PC-3 (cell line): ENCODE measurements at regions of chr1 and their contacts with region 1.

Region 1: GRCh38 chr1:154272217-154272998 is at the start of gene HAX1:
- DNase-seq: peak; percentile 99
- ATAC-seq: peak; percentile 93
- H3K4me3 ChIP-seq: peak within 1 kb of the TSS; percentile 87
- H3K27ac ChIP-seq: peak within 1 kb of the TSS; percentile 37
- H3K4me1 ChIP-seq: peaks cover 5% of the 10 kb centered on the region
- H3K27me3 ChIP-seq: no peaks in the 10 kb centered on the region
- CTCF ChIP-seq: peak; percentile 97
- total RNA-seq, gene HAX1: 230 and 281 TPM in 2 replicates

Region 2: GRCh38 chr1:153946622-153947241 is 325.7 kb before region 1 on chr1 and contains the start of gene DENND4B:
- CTCF ChIA-PET with region 1: no interaction called
- POLR2A ChIA-PET with region 1: interaction called, 15 read pairs
- intact Hi-C with region 1: no loop called
- DNase-seq: peak; percentile 86
- ATAC-seq: peak; percentile 88
- H3K4me3 ChIP-seq: peak within 1 kb of the TSS; percentile 81
- H3K27ac ChIP-seq: peak within 1 kb of the TSS; percentile 43
- H3K4me1 ChIP-seq: peaks cover 13% of the 10 kb centered on the region
- H3K27me3 ChIP-seq: no peaks in the 10 kb centered on the region
- CTCF ChIP-seq: peak; percentile 90
- total RNA-seq, gene DENND4B: 27.3 and 38.0 TPM in 2 replicates

Region 3: DNA sequence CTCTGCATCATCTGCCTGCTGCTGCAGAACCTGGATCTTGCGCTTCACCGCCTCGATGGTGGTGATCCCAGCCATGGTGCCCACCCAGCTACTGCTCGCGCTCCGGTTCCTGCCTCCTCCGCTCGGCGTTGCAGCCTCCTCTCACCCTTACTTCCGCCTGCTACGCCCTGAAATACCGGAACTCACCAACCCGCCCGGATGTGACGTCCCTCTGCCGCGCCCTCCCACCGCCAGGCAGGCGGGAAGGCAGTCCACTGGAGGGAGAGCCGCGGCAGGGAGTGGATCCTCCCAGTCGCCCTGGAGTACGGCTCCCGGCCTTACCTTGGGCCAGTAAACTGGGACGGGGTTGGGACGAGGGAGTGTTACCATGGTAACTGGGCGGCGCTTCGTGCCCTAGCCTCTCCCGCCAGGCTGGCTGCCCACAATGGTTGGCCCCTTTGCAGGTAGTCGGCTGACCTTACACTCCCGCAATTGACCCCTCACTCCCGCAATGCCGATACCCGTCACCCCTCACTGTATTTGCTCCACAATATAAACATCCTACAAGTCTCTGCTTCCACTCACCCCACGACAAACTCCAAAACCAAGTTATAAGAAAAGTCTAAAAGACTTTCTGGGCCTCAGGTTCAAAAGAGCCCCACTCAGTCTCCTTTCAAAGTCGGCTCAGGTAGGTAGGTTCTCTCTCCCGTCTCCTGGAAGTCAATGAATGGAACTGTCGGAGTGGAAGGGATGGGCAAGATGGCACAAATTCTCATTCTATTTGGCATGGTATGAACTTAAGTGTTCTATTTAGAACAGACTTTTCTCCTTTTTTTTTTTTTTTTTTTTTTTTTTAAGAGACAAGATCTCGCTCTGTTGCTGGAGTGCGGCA is 89.1 kb before region 1 on chr1:
- CTCF ChIA-PET with region 1: interaction called, 12 read pairs
- POLR2A ChIA-PET with region 1: no interaction called
- intact Hi-C with region 1: no loop called
- DNase-seq: peak; percentile 99
- ATAC-seq: peak; percentile 95
- H3K4me3 ChIP-seq: peak overlapping the region; percentile 80
- H3K27ac ChIP-seq: peak overlapping the region; percentile 83
- H3K4me1 ChIP-seq: peaks cover 35% of the 10 kb centered on the region
- H3K27me3 ChIP-seq: no peaks in the 10 kb centered on the region
- CTCF ChIP-seq: no peak

Region 4: DNA sequence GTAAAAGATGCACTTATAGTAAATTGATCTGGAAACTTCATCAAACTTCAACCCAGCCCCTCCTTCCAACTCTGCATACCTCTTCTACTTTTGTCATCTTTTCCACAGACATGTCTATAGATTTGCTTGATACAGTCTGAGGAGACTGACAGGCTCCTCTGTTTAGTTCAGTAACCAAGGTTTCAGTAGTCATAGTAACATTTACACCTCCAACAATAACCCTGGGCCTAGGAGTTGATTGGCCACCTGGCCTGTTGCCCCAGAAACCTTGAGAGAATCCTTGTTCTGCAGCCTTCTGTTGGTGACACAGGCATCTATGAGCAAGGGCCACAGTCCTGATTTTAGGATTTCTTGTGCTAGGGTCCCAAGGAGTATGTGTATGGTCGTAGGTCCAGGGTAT is 66.2 kb before region 1 on chr1 and contains the start of gene CFAP141:
- CTCF ChIA-PET with region 1: no interaction called
- POLR2A ChIA-PET with region 1: no interaction called
- intact Hi-C with region 1: no loop called
- DNase-seq: peak; percentile 27
- ATAC-seq: peak; percentile 60
- H3K4me3 ChIP-seq: no peak within 1 kb of the TSS
- H3K27ac ChIP-seq: no peak within 1 kb of the TSS
- H3K4me1 ChIP-seq: peaks cover 3% of the 10 kb centered on the region; the same call in 1 of the 2 replicates
- H3K27me3 ChIP-seq: no peaks in the 10 kb centered on the region
- CTCF ChIP-seq: no peak
- total RNA-seq, gene CFAP141: not detected in 2 replicates

Region 5: DNA sequence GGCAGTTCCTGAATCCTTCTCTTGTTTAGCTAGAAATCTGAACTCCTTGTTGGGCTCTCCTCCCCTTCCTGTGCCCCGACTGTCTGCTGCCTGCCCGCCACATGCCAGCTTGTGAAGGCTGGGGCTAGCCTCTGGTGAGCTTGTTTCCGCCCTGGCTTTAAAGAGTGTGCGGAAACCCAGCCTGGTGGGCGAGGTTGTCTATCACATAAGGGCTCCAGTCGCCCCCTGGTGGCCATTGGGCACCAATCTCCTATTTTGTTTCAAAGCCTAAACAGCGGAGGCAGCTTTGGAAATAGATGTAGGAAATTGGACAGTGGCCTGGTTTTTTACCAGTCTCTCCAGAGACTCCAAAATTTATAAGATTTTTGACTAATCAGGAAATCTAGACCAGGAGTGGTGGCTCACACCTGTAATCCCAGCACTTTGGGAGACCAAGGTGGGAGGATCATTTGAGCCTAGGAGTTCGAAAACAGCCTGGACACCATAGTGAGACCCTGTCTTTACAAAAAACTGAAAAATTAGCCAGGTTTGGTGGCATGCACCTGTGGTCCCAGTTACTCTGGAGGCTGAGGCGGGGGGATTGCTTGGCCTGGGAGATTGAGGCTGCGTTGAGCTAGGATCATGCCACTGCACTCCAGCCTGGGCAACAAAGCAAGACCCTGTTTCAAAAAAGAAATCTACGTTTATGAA is 62.8 kb after region 1 on chr1:
- CTCF ChIA-PET with region 1: interaction called, 17 read pairs
- POLR2A ChIA-PET with region 1: no interaction called
- intact Hi-C with region 1: loop called (anchors 1 kb)
- DNase-seq: peak; percentile 86
- ATAC-seq: peak; percentile 91
- H3K4me3 ChIP-seq: no peak overlapping the region
- H3K27ac ChIP-seq: no peak overlapping the region
- H3K4me1 ChIP-seq: 0 out of 2 replicates have a peak, but pooled peaks cover 3% of the 10 kb centered on the region
- H3K27me3 ChIP-seq: no peaks in the 10 kb centered on the region
- CTCF ChIP-seq: peak; percentile 97